Motor neuron (in vitro differentiated cells): ENCODE measurements at regions of chr11 and their contacts with region 1.

Region 1: GRCh38 chr11:57800444-57801182 is 39.0 kb downstream of the CTNND1 start:
- ATAC-seq: peak; percentile 71 to 98 (median 86)
- H3K4me3 ChIP-seq: no peak overlapping the region
- H3K27ac ChIP-seq: peak overlapping the region; percentile 29 to 32
- H3K4me1 ChIP-seq: peaks cover 6 to 10% of the 10 kb centered on the region in 2 donors

Region 2: DNA sequence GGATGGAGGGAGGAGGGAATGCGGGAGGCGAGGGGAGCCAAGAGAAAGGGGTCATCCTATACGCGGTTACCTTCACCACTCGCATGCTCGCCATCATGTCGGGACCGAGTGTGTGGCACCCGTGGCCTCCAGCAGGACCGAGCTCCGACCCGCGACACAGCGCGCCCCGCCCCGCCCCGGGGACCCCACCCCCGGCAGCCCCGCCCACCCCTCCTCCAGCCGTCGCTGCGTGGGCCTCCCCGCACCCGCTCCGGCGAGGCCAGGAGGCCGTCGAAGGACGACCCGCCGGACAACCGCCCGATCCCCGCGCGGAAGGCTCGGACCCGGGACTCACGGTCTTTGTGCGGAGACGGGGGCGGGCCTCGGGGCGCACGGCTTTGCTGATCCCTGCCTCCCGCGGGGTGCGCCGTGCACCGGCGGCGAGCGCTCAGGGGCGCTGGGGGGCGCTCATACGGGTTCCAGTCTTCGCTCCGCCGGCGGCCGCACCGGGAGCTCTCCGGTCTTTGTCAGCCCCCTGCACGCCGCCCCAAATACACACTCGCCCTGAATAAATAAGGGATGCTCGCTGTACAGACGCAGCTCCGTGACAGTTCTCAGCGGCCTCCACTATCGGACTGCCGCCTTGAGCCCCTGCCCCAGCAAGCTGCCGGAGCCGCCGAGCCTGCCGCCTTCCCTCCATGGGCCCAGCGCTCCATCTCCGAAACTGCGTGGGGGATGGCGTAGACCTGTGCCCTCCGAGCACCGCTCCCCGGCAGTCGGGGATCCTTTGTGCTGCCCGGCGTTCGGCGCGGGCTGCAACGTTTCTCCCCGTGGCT is 232.9 kb before region 1 on chr11 and contains the start of gene UBE2L6:
- in situ Hi-C with region 1: no loop called
- ATAC-seq: peak; percentile 72 to 89 (median 84)
- H3K4me3 ChIP-seq: peak within 1 kb of the TSS; percentile 82 to 99 (median 90)
- H3K27ac ChIP-seq: peak within 1 kb of the TSS; percentile 90 to 96
- H3K4me1 ChIP-seq: peaks cover 11 to 19% of the 10 kb centered on the region in 2 donors
- total RNA-seq, gene UBE2L6: 22.6 to 177 (median 52.5) TPM

Region 3: DNA sequence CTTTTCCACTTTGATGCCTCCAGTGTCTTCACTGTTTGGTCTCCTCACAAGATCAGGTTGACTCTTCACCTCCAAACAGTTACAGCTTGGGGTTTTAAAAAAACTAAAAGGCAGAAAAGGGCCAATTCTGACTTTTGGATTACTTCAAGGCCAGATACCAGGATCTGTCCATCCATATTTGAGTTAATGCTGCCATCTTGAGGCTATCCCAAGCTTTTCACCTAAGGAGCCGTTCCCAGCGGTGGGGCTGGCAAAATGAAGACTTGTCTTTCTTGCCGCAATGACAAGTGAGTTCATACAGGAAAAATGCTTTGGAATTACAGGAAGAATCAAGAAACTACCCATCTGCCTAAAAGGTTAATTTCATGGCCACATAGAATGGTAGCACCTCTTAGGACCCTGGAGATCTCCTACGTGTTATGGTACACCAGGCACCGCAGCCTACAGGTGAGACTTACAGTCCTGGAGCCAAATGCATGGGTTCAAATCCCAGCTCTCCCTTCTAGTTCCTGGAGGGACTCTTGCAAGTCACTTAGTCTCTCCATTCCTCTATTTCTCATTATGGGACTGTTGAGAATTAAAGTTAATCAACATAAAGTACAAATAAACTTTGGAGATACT is 713.2 kb after region 1 on chr11:
- in situ Hi-C with region 1: loop called in 3 of 9 experiments (anchors 10 to 25 kb)
- ATAC-seq: peak; percentile 59 to 96 (median 73)
- H3K4me3 ChIP-seq: no peak overlapping the region
- H3K27ac ChIP-seq: no peak overlapping the region
- H3K4me1 ChIP-seq: no peaks in the 10 kb centered on the region

Region 4: DNA sequence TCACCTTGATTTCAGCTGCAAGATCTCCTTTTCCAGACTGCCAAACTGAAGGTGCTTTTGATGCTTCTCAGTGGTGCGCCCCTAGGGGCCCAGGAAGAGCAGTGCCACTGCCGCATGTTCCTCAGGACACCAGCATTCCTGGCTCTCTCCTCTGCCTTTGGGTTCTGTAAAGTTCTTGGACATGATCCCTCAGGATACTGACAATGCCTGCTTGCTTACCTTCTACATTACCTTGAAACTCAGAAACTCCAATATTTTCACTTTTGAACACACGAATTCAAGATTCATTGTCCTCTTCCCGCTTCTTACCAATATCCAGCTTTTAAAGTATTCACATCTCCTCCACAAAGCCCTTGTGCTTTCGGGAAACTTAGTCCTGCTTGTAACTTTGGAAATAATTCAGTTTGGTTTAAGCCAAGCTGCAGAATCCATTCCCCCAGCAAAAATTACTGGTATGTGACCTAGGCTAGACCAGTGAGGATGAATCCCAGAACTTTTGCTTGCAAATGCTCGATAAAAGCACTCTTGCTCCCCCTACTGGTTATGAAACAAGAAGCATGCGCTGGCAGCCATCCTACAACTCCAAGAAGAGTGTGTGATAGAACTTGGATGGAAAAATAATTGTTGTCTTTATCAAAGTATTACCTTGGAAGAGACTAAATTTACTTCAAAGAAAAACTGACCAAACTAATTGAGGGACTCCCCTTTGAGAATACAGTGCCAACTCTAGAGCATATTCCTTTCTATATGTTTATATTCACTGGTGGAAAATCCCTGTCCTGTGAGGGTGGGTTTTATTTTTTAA is 723.8 kb after region 1 on chr11:
- in situ Hi-C with region 1: loop called in 3 of 9 experiments (anchors 10 to 25 kb)
- ATAC-seq: peak; percentile 61 to 97 (median 86)
- H3K4me3 ChIP-seq: no peak overlapping the region
- H3K27ac ChIP-seq: no peak overlapping the region
- H3K4me1 ChIP-seq: no peaks in the 10 kb centered on the region